ENCODE measurements at regions of chrX and their contacts with region 1.

Region 1: GRCh38 chrX:136200466-136200865 is 50.7 kb downstream of the MAP7D3 start:
- DNase-seq: peak in 1 of 2 experiments; percentile 15
- H3K4me3 ChIP-seq: no peak overlapping the region
- H3K4me3 Mint-ChIP-seq: no peak overlapping the region
- H3K27ac Mint-ChIP-seq: no peak overlapping the region
- H3K4me1 ChIP-seq: peaks cover 10% of the 10 kb centered on the region
- H3K4me1 Mint-ChIP-seq: no peaks in the 10 kb centered on the region
- H3K27me3 ChIP-seq: no peaks in the 10 kb centered on the region
- H3K27me3 Mint-ChIP-seq: no peaks in the 10 kb centered on the region
- CTCF ChIP-seq: peak in 1 of 2 experiments; percentile 27

Region 2: GRCh38 chrX:136170134-136170800 is 30.2 kb before region 1 on chrX:
- CTCF ChIA-PET with region 1: interaction called, 6 read pairs
- POLR2A ChIA-PET with region 1: no interaction called
- intact Hi-C with region 1: loop called (anchors 1 kb)
- DNase-seq: peak in 1 of 2 experiments; percentile 12
- H3K4me3 ChIP-seq: no peak overlapping the region
- H3K4me3 Mint-ChIP-seq: no peak overlapping the region
- H3K27ac Mint-ChIP-seq: no peak overlapping the region
- H3K4me1 ChIP-seq: no peaks in the 10 kb centered on the region
- H3K4me1 Mint-ChIP-seq: no peaks in the 10 kb centered on the region
- H3K27me3 ChIP-seq: no peaks in the 10 kb centered on the region
- H3K27me3 Mint-ChIP-seq: peaks cover 10% of the 10 kb centered on the region
- CTCF ChIP-seq: no peak

Region 3: DNA sequence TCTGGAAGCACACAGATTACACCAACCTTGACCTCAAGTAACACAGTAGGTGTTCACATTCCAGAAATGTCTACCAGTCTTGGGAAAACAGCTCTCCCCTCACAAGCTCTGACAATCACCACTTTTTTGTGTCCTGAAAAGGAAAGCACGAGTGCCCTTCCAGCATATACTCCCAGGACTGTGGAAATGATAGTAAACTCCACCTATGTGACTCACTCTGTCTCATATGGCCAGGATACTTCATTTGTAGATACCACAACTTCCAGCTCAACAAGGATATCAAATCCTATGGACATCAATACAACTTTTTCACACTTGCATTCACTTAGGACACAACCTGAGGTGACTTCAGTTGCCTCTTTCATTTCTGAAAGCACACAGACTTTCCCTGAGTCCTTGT is 147.2 kb after region 1 on chrX:
- CTCF ChIA-PET with region 1: no interaction called
- POLR2A ChIA-PET with region 1: no interaction called
- intact Hi-C with region 1: no loop called
- DNase-seq: no peak
- H3K4me3 ChIP-seq: no peak overlapping the region
- H3K4me3 Mint-ChIP-seq: no peak overlapping the region
- H3K27ac Mint-ChIP-seq: no peak overlapping the region
- H3K4me1 ChIP-seq: no peaks in the 10 kb centered on the region
- H3K4me1 Mint-ChIP-seq: no peaks in the 10 kb centered on the region
- H3K27me3 ChIP-seq: no peaks in the 10 kb centered on the region
- H3K27me3 Mint-ChIP-seq: peaks cover 7% of the 10 kb centered on the region
- CTCF ChIP-seq: no peak